Aorta (tissue), 5 donors: ENCODE measurements at regions of chr1 and their contacts with region 1.

Region 1: DNA sequence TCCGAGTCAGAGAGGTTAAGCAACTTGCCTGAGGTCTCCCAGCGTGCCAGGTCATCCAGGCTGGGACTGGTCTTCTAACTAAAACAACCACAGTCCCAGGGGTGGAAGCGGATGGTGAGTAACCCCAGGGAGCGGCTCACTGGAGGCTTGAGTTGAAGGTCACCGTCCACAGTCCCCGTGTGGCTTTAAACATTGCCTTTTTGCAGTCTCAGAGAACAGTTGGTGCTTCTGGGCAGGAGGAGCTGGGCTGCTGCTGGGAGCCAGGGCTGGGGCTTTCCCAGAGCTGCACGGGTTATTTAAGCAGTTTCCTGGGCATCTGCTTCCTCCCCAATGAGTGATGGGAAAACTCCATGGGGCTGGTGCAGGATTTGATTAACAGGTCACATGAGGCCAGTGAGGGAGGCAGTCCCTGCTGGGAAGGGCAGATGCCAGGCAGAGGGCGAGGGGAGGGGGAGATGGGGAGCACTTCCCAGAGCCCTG is 12.3 kb downstream of the ARHGEF10L start:
- DNase-seq: peak; percentile 82 to 86
- ATAC-seq: peak; percentile 75
- H3K4me3 ChIP-seq: no peak overlapping the region
- H3K27ac ChIP-seq: peak overlapping the region in 1 of 2 donors; percentile 84
- H3K4me1 ChIP-seq: peaks cover 0 to 5% of the 10 kb centered on the region in 2 donors
- H3K27me3 ChIP-seq: no peaks in the 10 kb centered on the region

Region 2: GRCh38 chr1:17624611-17625233 is 72.9 kb after region 1 on chr1:
- intact Hi-C with region 1: loop called in 1 of 2 experiments (anchors 5 kb)
- DNase-seq: peak; percentile 87 to 95
- ATAC-seq: peak; percentile 59
- H3K4me3 ChIP-seq: no peak overlapping the region
- H3K27ac ChIP-seq: peak overlapping the region; percentile 40 to 85
- H3K4me1 ChIP-seq: no peaks in the 10 kb centered on the region
- H3K27me3 ChIP-seq: no peaks in the 10 kb centered on the region

Region 3: DNA sequence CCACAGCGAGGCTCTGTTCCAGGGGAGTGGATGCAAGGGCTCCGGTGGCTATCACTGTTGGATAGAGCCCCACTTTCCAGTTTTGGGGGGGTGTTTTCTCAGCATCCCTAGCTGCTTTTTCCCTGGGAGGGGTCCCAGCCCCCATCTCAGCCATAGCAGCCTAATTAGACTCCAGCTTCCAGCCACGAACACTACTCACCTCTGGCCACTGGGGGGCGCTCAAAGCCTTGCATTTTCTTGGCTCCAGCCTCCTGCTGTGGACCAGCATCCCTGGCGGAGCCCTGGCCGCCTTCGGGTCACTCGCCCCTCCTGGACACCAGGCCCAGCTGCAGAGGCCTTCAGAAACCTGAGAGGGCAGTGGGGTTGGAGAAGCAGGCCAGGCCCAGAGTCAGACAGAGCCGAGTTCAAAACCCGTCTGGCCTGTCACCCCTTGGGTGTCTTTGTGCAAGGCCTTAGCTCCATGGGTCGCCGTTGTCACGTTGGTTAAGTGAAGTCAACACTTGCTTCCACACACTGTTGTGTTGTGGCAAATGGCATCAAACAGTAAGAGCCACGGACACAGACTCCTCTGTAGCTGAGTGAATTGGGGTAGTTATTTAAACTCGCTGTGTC is 109.9 kb after region 1 on chr1:
- intact Hi-C with region 1: no loop called
- DNase-seq: peak; percentile 77 to 89
- ATAC-seq: peak; percentile 34
- H3K4me3 ChIP-seq: no peak overlapping the region
- H3K27ac ChIP-seq: no peak overlapping the region
- H3K4me1 ChIP-seq: no peaks in the 10 kb centered on the region
- H3K27me3 ChIP-seq: no peaks in the 10 kb centered on the region